IMR-90 (cell line): ENCODE measurements at regions of chr3 and their contacts with region 1.

Region 1: DNA sequence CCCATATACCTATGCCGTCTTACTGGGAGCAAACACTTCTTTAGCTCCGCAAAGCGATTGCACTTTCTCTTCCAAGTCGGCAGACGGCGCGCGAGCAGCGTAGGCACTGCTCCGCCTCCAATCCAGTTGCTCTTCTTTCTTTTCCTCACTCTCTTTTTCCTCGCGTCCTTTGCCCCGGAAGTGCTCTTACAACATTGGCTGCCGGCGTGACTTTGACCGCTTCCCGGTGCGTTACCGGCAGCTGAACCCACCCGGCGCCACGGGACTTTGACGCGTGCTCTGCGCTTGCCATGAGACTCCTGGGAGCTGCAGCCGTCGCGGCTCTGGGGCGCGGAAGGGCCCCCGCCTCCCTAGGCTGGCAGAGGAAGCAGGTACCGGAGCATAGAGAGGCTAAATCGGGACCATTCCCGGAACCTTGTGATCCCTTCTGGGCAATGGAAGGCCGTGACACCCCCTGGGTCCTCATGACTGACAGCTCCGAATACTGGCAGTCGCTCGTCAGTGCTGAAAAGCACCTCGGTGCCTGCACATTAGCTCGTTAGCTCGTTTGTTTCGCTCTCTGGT is at the start of gene GFM1:
- DNase-seq: peak; percentile 94
- ATAC-seq: peak; percentile 99
- H3K4me3 ChIP-seq: peak within 1 kb of the TSS; percentile 81
- H3K27ac ChIP-seq: peak within 1 kb of the TSS; percentile 56
- H3K4me1 ChIP-seq: no peaks in the 10 kb centered on the region
- H3K27me3 ChIP-seq: no peaks in the 10 kb centered on the region
- CTCF ChIP-seq: peak; percentile 96
- POLR2A ChIP-seq: peak; percentile 80; the same call in 1 of the 2 replicates
- RAD21 ChIP-seq: peak; percentile 61
- total RNA-seq, gene GFM1: 36.0 and 55.0 TPM in 2 replicates

Region 2: GRCh38 chr3:158488670-158489069 is 155.8 kb before region 1 on chr3:
- CTCF ChIA-PET with region 1: no interaction called
- POLR2A ChIA-PET with region 1: no interaction called
- dilution Hi-C with region 1: no loop called
- in situ Hi-C with region 1: no loop called
- intact Hi-C with region 1: no loop called
- DNase-seq: peak; percentile 43
- ATAC-seq: no peak; the same call in 1 of the 2 replicates
- H3K4me3 ChIP-seq: no peak overlapping the region
- H3K27ac ChIP-seq: no peak overlapping the region
- H3K4me1 ChIP-seq: peaks cover 3% of the 10 kb centered on the region; the same call in 1 of the 2 replicates
- H3K27me3 ChIP-seq: no peaks in the 10 kb centered on the region
- CTCF ChIP-seq: no peak
- POLR2A ChIP-seq: no peak
- RAD21 ChIP-seq: no peak

Region 3: DNA sequence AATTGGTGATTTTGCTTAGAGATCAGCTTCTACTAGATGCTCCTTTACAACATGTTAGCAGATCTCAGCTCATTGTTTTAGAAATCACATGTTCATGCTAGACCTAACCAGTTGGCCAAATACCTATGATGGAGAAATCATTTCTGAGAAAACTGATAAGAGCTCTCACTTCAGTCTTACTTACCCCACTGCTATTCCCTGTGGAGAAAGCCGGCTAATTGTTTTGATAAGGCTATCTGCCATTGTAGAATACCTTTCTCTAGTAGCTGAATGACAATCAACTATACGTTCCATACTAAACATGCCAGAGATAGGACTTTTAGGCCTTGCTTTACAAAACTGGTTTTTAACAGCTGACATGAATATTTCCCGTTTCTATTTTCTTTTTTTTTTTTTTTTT is 99.6 kb before region 1 on chr3:
- CTCF ChIA-PET with region 1: interaction called, 3 read pairs
- POLR2A ChIA-PET with region 1: no interaction called
- dilution Hi-C with region 1: no loop called
- in situ Hi-C with region 1: no loop called
- intact Hi-C with region 1: loop called (anchors 5 kb)
- DNase-seq: no peak
- ATAC-seq: no peak
- H3K4me3 ChIP-seq: no peak overlapping the region
- H3K27ac ChIP-seq: no peak overlapping the region
- H3K4me1 ChIP-seq: 0 out of 2 replicates have a peak, but pooled peaks cover 1% of the 10 kb centered on the region
- H3K27me3 ChIP-seq: no peaks in the 10 kb centered on the region
- CTCF ChIP-seq: no peak
- POLR2A ChIP-seq: no peak
- RAD21 ChIP-seq: no peak

Region 4: DNA sequence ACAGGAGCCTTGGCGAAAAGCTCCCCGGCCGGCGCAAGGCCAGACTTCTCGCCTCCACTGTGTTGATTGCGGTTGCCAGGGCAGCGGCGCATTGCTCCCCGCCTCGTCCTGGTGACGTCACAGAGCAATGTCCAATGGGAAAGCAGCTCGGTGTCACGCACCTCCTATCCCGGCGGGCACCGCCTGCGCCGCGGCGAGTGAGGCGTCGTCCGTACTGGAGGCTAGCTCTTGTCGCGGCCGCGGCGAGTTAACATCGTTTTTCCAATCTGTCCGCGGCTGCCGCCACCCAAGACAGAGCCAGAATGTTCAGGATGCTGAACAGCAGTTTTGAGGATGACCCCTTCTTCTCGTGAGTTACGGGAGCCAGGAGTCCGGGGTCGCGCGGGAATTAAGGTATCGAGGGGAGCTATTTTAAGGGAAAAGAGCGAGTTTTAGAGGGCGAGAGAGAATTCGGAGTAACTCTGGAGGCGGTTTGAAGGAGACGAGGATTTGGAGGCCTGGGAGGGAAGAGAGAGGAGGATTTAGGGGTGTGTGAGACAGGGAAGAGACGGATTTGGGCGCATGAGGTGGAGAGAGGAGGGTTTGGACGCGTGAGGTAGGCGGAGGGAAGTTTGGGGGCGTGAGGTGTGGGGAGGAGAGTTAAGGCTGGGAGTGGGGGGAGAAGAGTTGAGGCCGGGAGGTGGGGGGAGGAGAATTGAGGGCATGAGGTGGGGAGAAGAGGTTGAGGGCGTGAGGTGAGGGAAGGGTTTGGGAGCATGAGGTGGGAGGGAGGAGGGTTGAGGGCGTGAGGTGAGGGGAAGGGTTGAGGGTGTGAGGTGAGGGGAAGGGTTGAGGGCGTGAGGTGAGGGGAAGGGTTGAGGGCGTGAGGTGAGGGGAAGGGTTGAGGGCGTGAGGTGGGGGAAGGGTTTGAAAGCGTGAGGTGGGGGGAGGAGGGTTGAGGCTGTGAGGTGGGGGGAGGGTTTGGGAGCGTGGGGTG is 73.1 kb before region 1 on chr3 and contains the start of gene MLF1:
- CTCF ChIA-PET with region 1: no interaction called
- POLR2A ChIA-PET with region 1: no interaction called
- dilution Hi-C with region 1: no loop called
- in situ Hi-C with region 1: no loop called
- intact Hi-C with region 1: loop called (anchors 5 kb)
- DNase-seq: peak; percentile 93
- ATAC-seq: peak; percentile 100
- H3K4me3 ChIP-seq: peak within 1 kb of the TSS; percentile 52
- H3K27ac ChIP-seq: 0 out of 2 replicates have a peak within 1 kb of the TSS, but pooled peaks have one; percentile 1
- H3K4me1 ChIP-seq: no peaks in the 10 kb centered on the region
- H3K27me3 ChIP-seq: no peaks in the 10 kb centered on the region
- CTCF ChIP-seq: no peak
- POLR2A ChIP-seq: peak; percentile 95
- RAD21 ChIP-seq: no peak
- total RNA-seq, gene MLF1: 5.2 and 7.5 TPM in 2 replicates

Region 5: GRCh38 chr3:159114582-159114981 is 470.2 kb after region 1 on chr3:
- CTCF ChIA-PET with region 1: no interaction called
- POLR2A ChIA-PET with region 1: no interaction called
- dilution Hi-C with region 1: no loop called
- in situ Hi-C with region 1: no loop called
- intact Hi-C with region 1: no loop called
- DNase-seq: no peak
- ATAC-seq: no peak
- H3K4me3 ChIP-seq: no peak overlapping the region
- H3K27ac ChIP-seq: no peak overlapping the region
- H3K4me1 ChIP-seq: no peaks in the 10 kb centered on the region
- H3K27me3 ChIP-seq: no peaks in the 10 kb centered on the region
- CTCF ChIP-seq: no peak
- POLR2A ChIP-seq: no peak
- RAD21 ChIP-seq: no peak